Left ventricle myocardium superior (tissue), 1 donor: ENCODE measurements at regions of chr6 and their contacts with region 1.

Region 1: GRCh38 chr6:160930547-160931377 is 60.8 kb upstream of the MAP3K4 start:
- DNase-seq: peak; percentile 85
- ATAC-seq: peak; percentile 96

Region 2: GRCh38 chr6:160992061-160992979 is 61.6 kb after region 1 on chr6:
- intact Hi-C with region 1: loop called (anchors 2 kb)
- DNase-seq: peak; percentile 66
- ATAC-seq: peak; percentile 67

Region 3: GRCh38 chr6:161292145-161292544 is 361.4 kb after region 1 on chr6:
- intact Hi-C with region 1: no loop called
- DNase-seq: no peak
- ATAC-seq: no peak

Region 4: GRCh38 chr6:161370880-161371279 is 440.1 kb after region 1 on chr6:
- intact Hi-C with region 1: loop called (anchors 5 kb)
- DNase-seq: peak; percentile 57
- ATAC-seq: peak; percentile 67